ENCODE measurements at regions of chr9 and their contacts with region 1.

Region 1: DNA sequence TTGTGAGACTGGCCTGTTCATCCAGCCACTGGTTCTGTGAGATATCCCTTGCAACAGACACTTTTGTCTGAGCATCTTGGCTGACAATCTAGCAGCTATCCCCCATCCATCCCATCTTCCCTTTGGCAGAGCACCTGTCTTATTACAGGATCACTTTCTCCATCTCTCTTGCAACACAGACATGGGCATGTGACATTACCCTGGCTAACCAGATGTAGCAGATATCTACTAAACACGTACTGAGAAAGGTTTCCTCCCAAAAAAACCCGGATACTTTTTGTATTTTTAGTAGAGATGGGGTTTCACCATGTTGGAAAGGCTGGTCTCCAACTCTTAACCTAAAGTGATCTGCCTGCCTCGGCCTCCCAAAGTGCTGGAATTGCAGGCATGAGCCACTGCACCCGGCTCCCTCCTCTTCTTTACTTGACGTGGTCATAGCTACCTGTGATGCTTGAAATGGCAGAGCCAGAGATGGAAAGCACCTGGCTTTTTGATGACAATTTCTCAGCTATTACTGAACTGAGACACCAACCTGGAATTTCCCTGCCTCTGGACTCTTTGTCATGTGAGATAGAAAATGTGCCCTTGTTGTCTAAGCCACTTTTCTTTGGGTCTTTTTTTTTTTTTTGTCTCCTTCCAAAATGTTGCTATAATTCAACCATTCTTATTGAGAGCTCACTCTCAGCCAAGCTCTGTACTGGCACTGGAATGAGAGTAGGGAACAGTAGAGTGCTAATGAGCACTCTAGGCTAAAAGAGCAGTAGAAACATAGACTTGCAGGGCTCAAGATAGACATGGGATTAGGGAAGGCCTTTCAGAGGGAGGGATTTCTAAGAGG is 32.6 kb downstream of the FNBP1 start:
- DNase-seq: peak in 31 of 35 experiments; percentile 17 to 90 (median 53)
- ATAC-seq: peak; percentile 41 to 82 (median 54)
- H3K4me3 ChIP-seq: no peak overlapping the region
- H3K4me3 Mint-ChIP-seq: peak overlapping the region in 2 of 3 donors; percentile 11 to 54
- H3K27ac ChIP-seq: peak overlapping the region; percentile 98
- H3K27ac Mint-ChIP-seq: peak overlapping the region; percentile 82 to 86
- H3K4me1 ChIP-seq: peaks cover 8 to 60% of the 10 kb centered on the region in 2 experiments
- H3K4me1 Mint-ChIP-seq: peaks cover 85 to 87% (median 85%) of the 10 kb centered on the region in 3 donors
- H3K27me3 ChIP-seq: no peaks in the 10 kb centered on the region
- H3K27me3 Mint-ChIP-seq: no peaks in the 10 kb centered on the region

Region 2: DNA sequence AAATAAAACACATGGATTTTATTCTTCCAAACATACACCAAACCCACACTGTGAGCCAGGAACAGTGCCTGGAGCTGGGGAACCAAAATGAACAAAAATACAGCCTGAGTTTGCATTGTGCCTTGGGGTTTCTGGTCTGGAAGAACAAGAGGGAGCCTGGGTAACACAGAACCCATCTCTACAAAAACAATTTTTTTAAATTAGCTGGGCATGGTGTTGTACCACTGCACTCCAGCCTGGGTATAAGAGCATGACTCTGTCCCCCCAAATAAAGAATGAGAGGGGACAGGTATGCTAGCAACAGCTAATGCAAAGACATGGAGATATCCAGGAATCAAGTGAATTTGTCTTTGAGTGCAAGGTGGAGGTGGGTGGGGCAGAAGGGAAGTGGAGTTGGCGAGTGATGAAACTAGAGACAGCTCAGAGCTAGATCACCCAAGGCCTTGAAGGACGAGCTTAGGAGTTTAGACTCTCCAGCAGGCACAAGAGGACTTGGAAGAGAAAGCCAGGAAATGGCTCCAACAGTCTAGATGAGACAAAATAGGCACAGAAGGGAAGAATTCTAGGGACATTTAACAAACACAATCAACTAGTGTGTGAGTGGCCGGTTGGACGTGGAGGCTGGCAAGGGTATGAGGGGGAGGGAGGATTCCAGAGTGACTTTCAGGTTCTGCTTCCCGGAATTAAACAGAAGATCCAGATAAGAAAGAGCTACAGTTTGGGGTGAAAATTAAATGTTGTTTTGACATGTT is 14.8 kb before region 1 on chr9:
- CTCF ChIA-PET with region 1: interaction called in 1 of 2 experiments, 5 read pairs
- POLR2A ChIA-PET with region 1: interaction called, 4 to 11 read pairs
- DNase-seq: peak in 2 of 35 experiments; percentile 26 to 47
- ATAC-seq: peak; percentile 42 to 60 (median 55)
- H3K4me3 ChIP-seq: no peak overlapping the region
- H3K4me3 Mint-ChIP-seq: peak overlapping the region; percentile 65 to 71 (median 68)
- H3K27ac ChIP-seq: peak overlapping the region; percentile 65
- H3K27ac Mint-ChIP-seq: peak overlapping the region; percentile 90 to 93
- H3K4me1 ChIP-seq: peaks cover 20 to 66% of the 10 kb centered on the region in 2 experiments
- H3K4me1 Mint-ChIP-seq: peaks cover 71 to 81% (median 80%) of the 10 kb centered on the region in 3 donors
- H3K27me3 ChIP-seq: no peaks in the 10 kb centered on the region
- H3K27me3 Mint-ChIP-seq: no peaks in the 10 kb centered on the region

Region 3: DNA sequence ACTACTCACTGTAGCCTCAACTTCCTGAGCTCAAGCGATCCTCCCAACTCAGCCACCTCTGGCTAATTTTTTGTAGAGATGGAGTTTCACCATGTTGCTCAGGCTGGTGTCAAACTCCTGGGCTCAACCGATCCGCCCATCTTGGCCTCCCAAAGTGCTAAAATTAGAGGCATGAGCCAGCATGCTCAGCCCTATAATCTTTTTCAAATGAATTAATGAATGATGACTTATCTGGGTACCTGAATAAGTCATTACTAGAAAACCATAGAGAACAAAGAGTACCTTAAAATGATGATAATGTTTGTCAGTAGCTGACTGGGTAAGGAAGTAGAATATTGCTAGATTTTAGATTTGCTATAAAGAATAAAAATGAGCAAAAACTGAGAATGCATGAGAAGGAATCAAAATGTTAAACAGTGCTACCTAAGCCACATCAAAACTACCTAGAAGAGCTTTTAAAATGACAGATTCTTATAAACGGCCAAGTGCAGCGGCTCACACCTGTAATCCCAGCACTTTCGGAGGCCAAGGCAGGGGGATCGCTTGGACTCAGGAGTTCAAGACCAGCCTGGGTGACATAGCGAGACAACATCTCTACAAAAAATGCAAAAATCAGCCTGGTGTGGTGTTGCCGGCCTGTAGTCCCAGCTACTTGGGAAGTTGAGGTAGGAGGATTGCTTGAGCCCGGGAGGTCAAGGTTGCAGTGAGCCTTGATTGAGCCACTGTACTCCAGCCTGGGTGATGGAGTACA is 19.0 kb after region 1 on chr9:
- CTCF ChIA-PET with region 1: interaction called, 3 to 9 read pairs
- POLR2A ChIA-PET with region 1: interaction called, 4 to 10 read pairs
- DNase-seq: no peak
- ATAC-seq: peak; percentile 25 to 54 (median 32)
- H3K4me3 ChIP-seq: peak overlapping the region in 1 of 2 donors; percentile 15
- H3K4me3 Mint-ChIP-seq: peak overlapping the region; percentile 45 to 74 (median 52)
- H3K27ac ChIP-seq: peak overlapping the region; percentile 47
- H3K27ac Mint-ChIP-seq: peak overlapping the region; percentile 53 to 88
- H3K4me1 ChIP-seq: peaks cover 28 to 77% of the 10 kb centered on the region in 2 experiments
- H3K4me1 Mint-ChIP-seq: peaks cover 95 to 98% (median 96%) of the 10 kb centered on the region in 3 donors
- H3K27me3 ChIP-seq: no peaks in the 10 kb centered on the region
- H3K27me3 Mint-ChIP-seq: no peaks in the 10 kb centered on the region

Region 4: DNA sequence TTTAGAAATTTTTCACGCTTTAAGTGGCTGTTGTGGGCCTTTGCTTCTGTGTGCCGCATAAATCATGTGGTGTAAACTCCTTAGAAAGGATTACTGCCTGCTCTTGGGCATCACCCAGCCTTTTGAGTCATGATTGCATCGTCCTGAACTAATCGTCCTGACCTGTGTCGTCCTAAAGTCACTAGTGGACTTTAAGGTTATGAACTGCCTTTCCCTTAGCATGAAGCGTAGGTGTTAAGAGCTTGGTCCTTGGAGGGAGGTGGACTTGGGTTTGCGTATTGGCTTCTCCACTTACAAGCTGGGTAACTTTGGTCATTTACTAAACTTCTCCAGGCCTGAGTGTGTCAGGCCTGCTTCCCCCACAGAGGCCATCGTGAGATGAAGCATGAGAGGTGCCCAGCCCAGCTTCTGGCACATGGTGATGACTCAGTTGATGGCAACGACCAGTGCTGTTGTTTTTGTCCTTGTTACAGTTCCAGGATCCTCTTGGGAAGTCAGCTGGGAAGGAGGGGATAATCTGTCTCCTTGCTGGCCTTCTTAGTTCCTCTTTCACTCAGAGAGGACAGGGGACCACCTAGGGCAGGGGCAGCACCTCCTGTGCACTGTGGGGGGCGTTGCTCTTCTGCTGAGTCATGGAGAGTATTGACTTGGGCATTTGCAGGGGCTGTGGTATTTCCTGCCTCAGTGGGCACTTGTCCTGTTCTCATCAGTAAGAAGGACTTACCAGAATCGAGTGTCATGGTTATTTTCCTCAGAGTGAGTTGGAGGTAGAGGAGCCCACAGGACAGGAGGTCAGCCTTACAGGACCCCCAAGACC is 107.7 kb after region 1 on chr9:
- CTCF ChIA-PET with region 1: no interaction called
- POLR2A ChIA-PET with region 1: interaction called in 1 of 2 experiments, 11 read pairs
- DNase-seq: no peak
- ATAC-seq: no peak
- H3K4me3 ChIP-seq: no peak overlapping the region
- H3K4me3 Mint-ChIP-seq: no peak overlapping the region
- H3K27ac ChIP-seq: no peak overlapping the region
- H3K27ac Mint-ChIP-seq: no peak overlapping the region
- H3K4me1 ChIP-seq: no peaks in the 10 kb centered on the region
- H3K4me1 Mint-ChIP-seq: no peaks in the 10 kb centered on the region
- H3K27me3 ChIP-seq: no peaks in the 10 kb centered on the region
- H3K27me3 Mint-ChIP-seq: no peaks in the 10 kb centered on the region